CD4-positive, alpha-beta T cell (primary cell): ENCODE measurements at regions of chr12 and their contacts with region 1.

Region 1: DNA sequence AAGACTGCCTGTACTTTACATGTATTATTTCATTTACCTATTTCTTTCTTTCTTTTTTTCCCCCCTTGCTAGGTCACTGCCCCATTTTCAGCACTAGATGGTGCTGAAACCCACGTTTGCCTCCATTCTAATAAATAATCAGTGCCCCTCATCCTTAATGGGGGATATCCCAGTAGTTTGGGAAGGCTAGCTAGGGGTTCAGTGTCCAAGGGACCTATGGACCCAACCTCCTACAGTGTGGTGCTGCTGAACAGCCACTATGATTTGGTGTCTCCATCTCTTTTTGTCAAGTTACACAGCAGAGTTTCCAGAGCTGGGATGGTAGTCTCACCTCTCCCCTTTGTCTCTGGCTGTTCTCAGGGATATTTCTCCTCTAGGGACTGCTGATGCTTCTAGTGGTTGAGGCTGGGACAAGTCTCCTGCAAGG is 6.5 kb upstream of the HCFC2 start:
- DNase-seq: peak in 4 of 14 experiments; percentile 15 to 43 (median 36)
- ATAC-seq: peak; percentile 60
- H3K4me3 ChIP-seq: no peak overlapping the region
- H3K4me3 Mint-ChIP-seq: no peak overlapping the region
- H3K27ac ChIP-seq: no peak overlapping the region
- H3K27ac Mint-ChIP-seq: no peak overlapping the region
- H3K4me1 ChIP-seq: no peaks in the 10 kb centered on the region
- H3K4me1 Mint-ChIP-seq: no peaks in the 10 kb centered on the region
- H3K27me3 ChIP-seq: peaks cover 5 to 7% of the 10 kb centered on the region in 2 experiments
- H3K27me3 Mint-ChIP-seq: peaks cover 43% of the 10 kb centered on the region
- CTCF ChIP-seq: peak; percentile 70

Region 2: GRCh38 chr12:104358347-104359003 is 300.7 kb after region 1 on chr12:
- CTCF ChIA-PET with region 1: no interaction called
- POLR2A ChIA-PET with region 1: no interaction called
- intact Hi-C with region 1: loop called in 1 of 2 experiments (anchors 5 kb)
- DNase-seq: peak; percentile 47 to 83 (median 58)
- ATAC-seq: peak; percentile 96
- H3K4me3 ChIP-seq: no peak overlapping the region
- H3K4me3 Mint-ChIP-seq: no peak overlapping the region
- H3K27ac ChIP-seq: no peak overlapping the region
- H3K27ac Mint-ChIP-seq: no peak overlapping the region
- H3K4me1 ChIP-seq: no peaks in the 10 kb centered on the region
- H3K4me1 Mint-ChIP-seq: no peaks in the 10 kb centered on the region
- H3K27me3 ChIP-seq: no peaks in the 10 kb centered on the region
- H3K27me3 Mint-ChIP-seq: no peaks in the 10 kb centered on the region
- CTCF ChIP-seq: peak; percentile 77